ENCODE measurements at regions of chr13 and their contacts with region 1.

Region 1: DNA sequence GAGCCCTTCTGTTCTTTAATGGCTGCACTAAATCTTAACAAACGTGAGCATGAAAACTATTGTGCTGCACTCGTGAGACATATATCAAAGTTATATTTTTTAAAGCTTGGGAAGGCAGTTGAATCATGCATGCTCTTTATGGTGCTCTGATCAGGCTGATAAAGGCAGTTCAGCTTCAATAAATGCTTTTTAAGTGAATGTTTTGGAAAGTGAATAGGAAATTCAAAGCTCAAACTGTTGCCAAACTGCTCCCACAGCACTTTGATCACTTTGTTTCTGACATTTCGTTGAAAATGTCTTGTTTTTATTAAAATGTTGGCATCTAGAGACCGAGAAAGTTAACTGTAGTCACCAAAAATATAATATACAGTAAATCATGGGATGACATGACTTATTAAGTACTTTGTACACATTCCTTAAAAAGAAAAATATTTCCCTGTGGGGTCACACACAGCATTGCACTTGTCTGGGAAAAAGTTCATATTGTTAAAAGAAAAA is 625.7 kb upstream of the PCDH9 start:
- DNase-seq: no peak
- H3K4me3 ChIP-seq: no peak overlapping the region
- H3K27ac ChIP-seq: no peak overlapping the region
- H3K4me1 ChIP-seq: no peaks in the 10 kb centered on the region
- H3K27me3 ChIP-seq: no peaks in the 10 kb centered on the region
- CTCF ChIP-seq: no peak
- POLR2A ChIP-seq: no peak

Region 2: GRCh38 chr13:67943116-67943515 is 87.3 kb after region 1 on chr13:
- intact Hi-C with region 1: no loop called
- DNase-seq: no peak
- H3K4me3 ChIP-seq: no peak overlapping the region
- H3K27ac ChIP-seq: no peak overlapping the region
- H3K4me1 ChIP-seq: no peaks in the 10 kb centered on the region
- H3K27me3 ChIP-seq: no peaks in the 10 kb centered on the region
- CTCF ChIP-seq: no peak
- POLR2A ChIP-seq: no peak

Region 3: GRCh38 chr13:69010789-69011188 is 1155.0 kb after region 1 on chr13:
- intact Hi-C with region 1: loop called (anchors 5 kb)
- DNase-seq: no peak
- H3K4me3 ChIP-seq: no peak overlapping the region
- H3K27ac ChIP-seq: no peak overlapping the region
- H3K4me1 ChIP-seq: no peaks in the 10 kb centered on the region
- H3K27me3 ChIP-seq: no peaks in the 10 kb centered on the region
- CTCF ChIP-seq: no peak
- POLR2A ChIP-seq: no peak